Activated T-helper 1 cell treated with anti-CD3 and anti-CD28 coated beads, Interleukin-12 subunit alpha, Interleukin-12 subunit beta, Interleukin-2, Interleukin-4 antibody, amounts not matched to agents 30 ng/mL and 10 ng/mL and 1 ng/mL, durations not matched to agents 14 hours and 24 hours and 36 hours (primary cell): ENCODE measurements at regions of chr11 and their contacts with region 1.

Region 1: GRCh38 chr11:809287-810039 is at the start of gene RPLP2:
- DNase-seq: peak; percentile 97
- H3K4me3 Mint-ChIP-seq: peak within 1 kb of the TSS; percentile 92
- H3K27ac Mint-ChIP-seq: peak within 1 kb of the TSS; percentile 90
- H3K4me1 Mint-ChIP-seq: peaks cover 28% of the 10 kb centered on the region
- H3K27me3 Mint-ChIP-seq: no peaks in the 10 kb centered on the region
- total RNA-seq, gene RPLP2: 2,072 and 2,148 TPM in 2 replicates

Region 2: GRCh38 chr11:207208-207862 is 602.1 kb before region 1 on chr11 and contains the starts of genes BET1L and RIC8A:
- intact Hi-C with region 1: loop called (anchors 5 kb)
- DNase-seq: peak; percentile 97
- H3K4me3 Mint-ChIP-seq: peak within 1 kb of the TSS; percentile 89
- H3K27ac Mint-ChIP-seq: peak within 1 kb of the TSS; percentile 98
- H3K4me1 Mint-ChIP-seq: peaks cover 55% of the 10 kb centered on the region
- H3K27me3 Mint-ChIP-seq: no peaks in the 10 kb centered on the region
- total RNA-seq, gene BET1L: 42.0 and 48.7 TPM in 2 replicates
- total RNA-seq, gene RIC8A: 132 and 149 TPM in 2 replicates

Region 3: GRCh38 chr11:737371-737770 is 72.1 kb before region 1 on chr11:
- intact Hi-C with region 1: no loop called
- DNase-seq: no peak
- H3K4me3 Mint-ChIP-seq: peak overlapping the region; percentile 60
- H3K27ac Mint-ChIP-seq: no peak overlapping the region
- H3K4me1 Mint-ChIP-seq: peaks cover 10% of the 10 kb centered on the region
- H3K27me3 Mint-ChIP-seq: peaks cover 13% of the 10 kb centered on the region

Region 4: DNA sequence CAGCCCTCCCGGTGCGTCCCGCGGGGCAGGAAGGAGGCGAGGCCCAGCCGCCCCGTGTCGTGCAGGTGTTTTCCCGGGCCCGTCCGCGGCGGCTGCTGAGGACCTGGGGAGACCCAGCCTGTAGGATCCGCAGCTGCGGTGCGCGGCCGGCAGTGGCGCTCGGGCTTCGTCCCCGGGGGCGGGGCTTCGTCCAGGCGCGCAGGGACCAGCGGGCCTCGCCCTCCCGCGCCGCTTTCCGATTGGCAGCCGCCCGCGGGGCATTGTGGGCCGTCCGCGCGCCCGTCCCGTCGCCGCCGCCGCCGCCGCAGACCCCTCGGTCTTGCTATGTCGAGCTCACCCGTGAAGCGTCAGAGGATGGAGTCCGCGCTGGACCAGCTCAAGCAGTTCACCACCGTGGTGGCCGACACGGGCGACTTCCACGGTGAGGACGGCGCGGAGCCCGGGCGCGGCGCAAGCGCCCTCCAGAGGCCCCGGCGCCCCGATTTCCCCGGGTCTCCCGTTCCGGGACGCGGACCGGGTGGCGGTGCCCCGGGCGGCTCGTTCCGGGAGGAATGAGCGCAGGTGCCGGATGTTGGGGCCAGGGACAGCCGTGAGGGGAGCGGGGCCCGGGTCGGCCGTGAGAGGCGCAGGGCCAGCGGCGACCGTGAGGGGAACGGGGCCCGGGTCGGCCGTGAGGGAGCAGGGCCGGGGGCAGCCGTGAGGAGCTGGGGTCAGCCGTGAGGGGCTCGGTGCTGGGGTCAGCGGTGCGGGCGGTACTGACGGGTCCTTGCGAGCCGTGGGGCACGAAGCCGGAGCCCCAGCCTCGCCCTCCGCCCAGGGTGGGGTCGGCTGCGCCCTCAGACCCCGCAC is 62.1 kb before region 1 on chr11 and contains the start of gene TALDO1:
- intact Hi-C with region 1: loop called (anchors 1 kb)
- DNase-seq: peak; percentile 88
- H3K4me3 Mint-ChIP-seq: peak within 1 kb of the TSS; percentile 91
- H3K27ac Mint-ChIP-seq: peak within 1 kb of the TSS; percentile 90
- H3K4me1 Mint-ChIP-seq: peaks cover 25% of the 10 kb centered on the region
- H3K27me3 Mint-ChIP-seq: no peaks in the 10 kb centered on the region
- total RNA-seq, gene TALDO1: 269 and 283 TPM in 2 replicates

Region 5: DNA sequence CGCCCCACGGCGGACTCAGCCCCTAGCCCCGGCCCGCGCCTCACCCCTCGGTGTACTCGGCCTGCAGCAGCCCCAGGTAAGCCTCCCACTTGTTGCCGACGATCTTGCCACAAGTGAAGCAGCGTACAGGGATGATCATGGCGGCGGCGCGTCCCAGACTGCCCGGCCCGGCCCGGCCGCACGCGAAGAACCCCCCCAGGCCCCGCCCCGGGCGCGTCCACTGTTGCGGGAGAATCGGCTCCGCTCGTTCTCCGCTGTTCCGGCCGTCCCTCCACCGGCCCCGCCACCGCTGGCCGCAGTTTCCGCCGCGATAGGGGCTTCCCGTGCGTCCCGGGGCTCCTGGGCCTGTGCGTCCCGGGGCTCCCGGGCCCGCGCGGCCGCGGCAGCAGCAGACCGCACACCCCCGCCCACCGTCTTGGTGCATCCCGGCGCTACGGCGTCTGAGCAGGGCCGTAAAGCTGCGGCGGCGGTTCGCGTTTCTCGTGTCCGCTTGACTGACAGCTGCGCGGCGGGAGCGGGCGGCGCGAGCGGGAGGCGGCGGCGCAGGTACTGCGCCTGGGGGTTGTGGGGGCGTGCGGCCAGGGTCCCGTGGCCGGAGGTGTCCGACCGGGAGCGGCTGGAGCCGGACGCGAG is 33.0 kb after region 1 on chr11 and contains the starts of genes POLR2L and TSPAN4:
- intact Hi-C with region 1: loop called (anchors 5 kb)
- DNase-seq: peak; percentile 82
- H3K4me3 Mint-ChIP-seq: peak within 1 kb of the TSS; percentile 89
- H3K27ac Mint-ChIP-seq: peak within 1 kb of the TSS; percentile 73
- H3K4me1 Mint-ChIP-seq: peaks cover 16% of the 10 kb centered on the region
- H3K27me3 Mint-ChIP-seq: peaks cover 2% of the 10 kb centered on the region
- total RNA-seq, gene POLR2L: 114 and 126 TPM in 2 replicates
- total RNA-seq, gene TSPAN4: 12.8 and 13.9 TPM in 2 replicates